Endothelial cell of umbilical vein (primary cell): ENCODE measurements at regions of chr3 and their contacts with region 1.

Region 1: GRCh38 chr3:147616998-147617619 is 207.9 kb downstream of the ZIC1 start:
- DNase-seq: peak; percentile 13
- H3K4me3 ChIP-seq: no peak overlapping the region
- H3K27ac ChIP-seq: no peak overlapping the region
- H3K4me1 ChIP-seq: no peaks in the 10 kb centered on the region
- H3K27me3 ChIP-seq: peaks cover 0 to 1% of the 10 kb centered on the region in 2 experiments
- CTCF ChIP-seq: peak; percentile 7 to 28
- POLR2A ChIP-seq: no peak

Region 2: GRCh38 chr3:147119989-147120388 is 497.1 kb before region 1 on chr3:
- CTCF ChIA-PET with region 1: interaction called, 26 read pairs
- POLR2A ChIA-PET with region 1: no interaction called
- dilution Hi-C with region 1: no loop called
- intact Hi-C with region 1: loop called (anchors 10 kb)
- DNase-seq: peak; percentile 29
- H3K4me3 ChIP-seq: no peak overlapping the region
- H3K27ac ChIP-seq: no peak overlapping the region
- H3K4me1 ChIP-seq: no peaks in the 10 kb centered on the region
- H3K27me3 ChIP-seq: peaks cover 0 to 4% of the 10 kb centered on the region in 2 experiments
- CTCF ChIP-seq: peak in 1 of 2 donors; percentile 33
- POLR2A ChIP-seq: no peak

Region 3: DNA sequence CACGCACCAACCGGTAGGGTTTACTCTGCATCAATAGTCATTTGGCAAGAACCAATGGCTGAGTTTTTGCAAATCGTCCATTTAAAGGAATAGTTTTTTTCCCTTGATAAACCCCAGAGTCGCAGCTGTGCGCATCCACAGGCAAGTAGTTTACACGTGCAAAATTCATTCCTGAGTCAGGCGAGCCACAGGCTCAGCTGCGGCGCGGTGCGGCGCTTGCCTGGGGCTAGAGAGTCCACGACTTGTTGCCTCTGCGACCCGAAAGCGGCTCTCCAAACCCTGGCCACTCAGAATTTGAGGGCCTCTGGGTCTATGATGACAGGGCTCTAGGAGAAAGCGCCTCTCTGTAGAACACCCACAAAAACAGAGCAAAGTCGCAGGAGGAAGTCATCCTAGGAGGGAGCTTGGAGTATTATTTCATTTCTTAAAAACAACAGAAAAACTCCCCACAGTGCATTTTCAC is 247.4 kb before region 1 on chr3:
- CTCF ChIA-PET with region 1: no interaction called
- POLR2A ChIA-PET with region 1: no interaction called
- dilution Hi-C with region 1: no loop called
- intact Hi-C with region 1: no loop called
- DNase-seq: no peak
- H3K4me3 ChIP-seq: no peak overlapping the region
- H3K27ac ChIP-seq: no peak overlapping the region
- H3K4me1 ChIP-seq: no peaks in the 10 kb centered on the region
- H3K27me3 ChIP-seq: peaks cover 88 to 97% of the 10 kb centered on the region in 2 experiments
- CTCF ChIP-seq: no peak
- POLR2A ChIP-seq: no peak

Region 4: DNA sequence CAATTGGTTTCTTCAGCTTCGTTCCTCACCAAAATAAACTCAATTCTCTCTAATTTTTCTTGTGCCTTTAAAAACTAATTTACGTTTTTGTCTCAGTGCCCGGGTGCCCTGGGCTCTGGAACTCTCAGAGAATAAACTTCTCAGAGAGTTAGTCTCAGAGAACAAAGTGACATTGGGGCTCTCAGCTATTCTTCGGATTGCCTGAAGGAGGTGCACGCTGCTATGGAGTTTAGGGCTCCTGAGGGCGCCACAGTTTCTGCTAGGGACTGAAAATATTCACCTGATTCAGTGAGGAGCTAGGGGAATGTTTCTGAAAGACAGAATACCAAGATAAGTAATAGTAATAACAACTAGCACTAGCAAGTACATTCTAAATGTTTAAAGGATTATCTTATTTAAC is 233.5 kb before region 1 on chr3:
- CTCF ChIA-PET with region 1: interaction called, 10 read pairs
- POLR2A ChIA-PET with region 1: no interaction called
- dilution Hi-C with region 1: no loop called
- intact Hi-C with region 1: loop called (anchors 10 kb)
- DNase-seq: no peak
- H3K4me3 ChIP-seq: no peak overlapping the region
- H3K27ac ChIP-seq: no peak overlapping the region
- H3K4me1 ChIP-seq: no peaks in the 10 kb centered on the region
- H3K27me3 ChIP-seq: peaks cover 90 to 99% of the 10 kb centered on the region in 2 experiments
- CTCF ChIP-seq: peak; percentile 27 to 38
- POLR2A ChIP-seq: no peak

Region 5: DNA sequence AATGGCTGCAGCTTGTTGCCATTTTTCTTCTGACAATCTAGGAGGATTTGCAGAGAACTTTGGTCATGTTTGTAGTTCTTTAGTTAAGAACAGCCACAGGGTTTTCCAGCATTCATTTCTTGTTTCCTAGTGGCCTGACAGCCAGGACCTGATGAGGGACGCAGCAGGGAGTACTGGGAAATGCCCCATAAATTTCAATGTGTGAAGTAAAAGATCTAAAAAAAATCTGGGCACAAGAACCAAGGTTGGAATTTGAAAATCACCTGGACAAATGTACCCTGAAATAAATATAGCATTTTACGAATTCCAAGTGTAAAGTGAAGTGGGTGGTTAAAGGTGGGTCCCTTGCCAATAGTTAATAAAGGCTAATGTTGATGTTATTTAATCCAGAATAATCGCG is 13.0 kb before region 1 on chr3:
- CTCF ChIA-PET with region 1: interaction called, 13 read pairs
- POLR2A ChIA-PET with region 1: no interaction called
- dilution Hi-C with region 1: no loop called
- intact Hi-C with region 1: no loop called
- DNase-seq: no peak
- H3K4me3 ChIP-seq: no peak overlapping the region
- H3K27ac ChIP-seq: no peak overlapping the region
- H3K4me1 ChIP-seq: no peaks in the 10 kb centered on the region
- H3K27me3 ChIP-seq: peaks cover 0 to 2% of the 10 kb centered on the region in 2 experiments
- CTCF ChIP-seq: no peak
- POLR2A ChIP-seq: no peak

Region 6: DNA sequence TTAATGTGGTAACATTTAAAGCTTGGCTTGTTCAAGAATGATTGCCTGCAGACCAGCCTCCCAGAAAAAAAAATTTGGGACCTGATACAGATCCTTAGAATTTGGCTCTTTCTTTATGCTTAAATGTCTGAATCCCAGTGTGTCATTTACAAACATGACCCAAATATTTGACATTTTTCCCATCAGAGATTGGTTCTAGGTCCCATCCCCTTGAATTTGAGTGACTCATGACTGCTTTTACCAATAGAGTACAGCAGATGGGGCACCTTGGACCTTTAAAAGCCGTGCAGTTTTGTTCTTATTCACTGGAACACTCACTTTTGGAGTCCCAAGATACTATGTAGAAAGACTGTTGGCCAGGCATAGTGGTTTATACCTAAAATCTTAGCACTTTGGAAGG is 23.7 kb after region 1 on chr3:
- CTCF ChIA-PET with region 1: interaction called, 23 read pairs
- POLR2A ChIA-PET with region 1: no interaction called
- dilution Hi-C with region 1: no loop called
- intact Hi-C with region 1: no loop called
- DNase-seq: no peak
- H3K4me3 ChIP-seq: no peak overlapping the region
- H3K27ac ChIP-seq: no peak overlapping the region
- H3K4me1 ChIP-seq: no peaks in the 10 kb centered on the region
- H3K27me3 ChIP-seq: no peaks in the 10 kb centered on the region
- CTCF ChIP-seq: no peak
- POLR2A ChIP-seq: no peak

Region 7: DNA sequence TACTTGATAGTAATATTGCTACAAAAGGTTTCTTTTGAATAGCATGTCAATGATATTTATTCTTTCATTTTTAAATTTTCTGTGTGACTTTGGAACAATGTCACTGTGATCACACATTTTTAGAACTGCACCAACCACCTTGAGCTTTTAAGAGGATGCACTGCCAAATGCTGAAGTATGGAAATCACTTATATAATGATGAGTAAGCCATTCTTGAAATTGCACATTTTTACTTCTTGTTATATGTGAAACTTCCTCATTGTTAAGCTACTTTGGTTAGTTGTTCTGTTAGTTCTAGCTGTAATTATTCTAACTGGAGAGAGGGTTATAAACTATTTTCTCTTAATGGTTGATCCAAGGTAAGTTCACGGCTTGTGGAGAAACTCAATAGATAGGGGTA is 339.5 kb after region 1 on chr3:
- CTCF ChIA-PET with region 1: no interaction called
- POLR2A ChIA-PET with region 1: no interaction called
- dilution Hi-C with region 1: no loop called
- intact Hi-C with region 1: no loop called
- DNase-seq: no peak
- H3K4me3 ChIP-seq: no peak overlapping the region
- H3K27ac ChIP-seq: no peak overlapping the region
- H3K4me1 ChIP-seq: no peaks in the 10 kb centered on the region
- H3K27me3 ChIP-seq: no peaks in the 10 kb centered on the region
- CTCF ChIP-seq: no peak
- POLR2A ChIP-seq: no peak

Region 8: GRCh38 chr3:149393345-149394160 is 1776.4 kb after region 1 on chr3:
- CTCF ChIA-PET with region 1: no interaction called
- POLR2A ChIA-PET with region 1: no interaction called
- dilution Hi-C with region 1: no loop called
- intact Hi-C with region 1: no loop called
- DNase-seq: peak; percentile 88
- H3K4me3 ChIP-seq: peak overlapping the region in 1 of 3 experiments; percentile 21
- H3K27ac ChIP-seq: peak overlapping the region; percentile 90
- H3K4me1 ChIP-seq: peaks cover 31% of the 10 kb centered on the region
- H3K27me3 ChIP-seq: no peaks in the 10 kb centered on the region
- CTCF ChIP-seq: peak; percentile 84
- POLR2A ChIP-seq: no peak